ENCODE measurements at regions of chr20 and their contacts with region 1.

Region 1: DNA sequence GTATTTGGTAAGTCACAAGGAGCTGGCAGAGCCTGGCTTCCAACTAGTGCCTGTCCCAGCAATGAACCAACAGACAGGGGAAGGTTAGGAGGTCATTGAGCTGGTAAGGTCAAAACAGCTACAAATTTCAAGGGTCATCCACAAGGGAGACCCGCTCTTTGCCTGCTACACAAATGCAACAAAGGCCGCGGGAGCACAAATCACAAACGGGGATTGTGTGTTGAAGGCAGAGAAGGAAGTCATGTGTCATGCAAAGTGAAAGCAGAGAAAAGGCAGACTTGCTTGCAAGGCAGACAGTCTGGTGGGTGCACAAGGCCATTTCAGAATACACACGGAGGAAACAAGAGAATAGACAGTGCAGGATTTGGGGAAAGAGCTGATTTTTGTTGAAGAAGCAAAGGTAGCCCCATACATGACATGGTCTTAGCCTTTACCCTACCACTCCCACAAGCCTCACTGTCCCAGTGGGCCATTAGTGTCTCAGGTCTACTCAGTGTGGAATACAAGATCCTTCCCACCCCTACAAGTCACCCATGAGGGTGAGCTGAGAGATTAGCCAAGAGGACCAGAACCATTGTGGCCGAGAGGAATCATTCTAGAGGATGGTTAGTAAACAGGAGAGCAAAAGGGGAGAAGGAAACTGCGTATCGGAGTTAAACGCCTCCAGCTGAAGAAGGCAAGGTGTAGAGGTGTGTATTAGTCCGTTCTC is 18.1 kb upstream of the SAMHD1 start:
- DNase-seq: peak in 6 of 9 experiments; percentile 33 to 71 (median 46)
- ATAC-seq: peak; percentile 80
- H3K4me3 ChIP-seq: peak overlapping the region in 1 of 2 experiments; percentile 26
- H3K4me3 Mint-ChIP-seq: peak overlapping the region; percentile 51
- H3K27ac ChIP-seq: peak overlapping the region; percentile 38 to 43
- H3K27ac Mint-ChIP-seq: peak overlapping the region; percentile 91
- H3K4me1 ChIP-seq: peaks cover 74% of the 10 kb centered on the region
- H3K4me1 Mint-ChIP-seq: peaks cover 68% of the 10 kb centered on the region
- H3K27me3 ChIP-seq: no peaks in the 10 kb centered on the region
- H3K27me3 Mint-ChIP-seq: no peaks in the 10 kb centered on the region
- CTCF ChIP-seq: no peak

Region 2: DNA sequence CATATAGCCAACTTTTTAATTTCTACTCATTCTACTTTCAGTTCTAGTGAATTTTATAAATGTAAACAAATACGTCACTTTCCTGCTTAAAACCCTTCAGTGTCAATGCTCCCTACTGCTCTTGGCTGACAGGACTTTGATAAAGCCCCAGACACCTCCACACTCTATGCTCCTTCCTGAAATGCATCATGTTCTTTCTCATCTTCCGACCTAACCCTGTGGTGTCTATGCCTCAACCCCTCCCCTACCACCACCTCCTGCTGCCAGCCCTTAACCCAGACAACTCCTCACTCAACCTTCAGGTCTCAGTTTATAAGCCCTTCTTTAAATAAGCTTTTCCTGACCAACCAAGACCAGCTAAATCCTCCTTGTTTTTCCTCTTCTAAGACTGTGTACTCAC is 74.6 kb before region 1 on chr20:
- CTCF ChIA-PET with region 1: no interaction called
- POLR2A ChIA-PET with region 1: no interaction called
- intact Hi-C with region 1: no loop called
- DNase-seq: no peak
- ATAC-seq: peak; percentile 56
- H3K4me3 ChIP-seq: no peak overlapping the region
- H3K4me3 Mint-ChIP-seq: no peak overlapping the region
- H3K27ac ChIP-seq: no peak overlapping the region
- H3K27ac Mint-ChIP-seq: peak overlapping the region; percentile 87
- H3K4me1 ChIP-seq: no peaks in the 10 kb centered on the region
- H3K4me1 Mint-ChIP-seq: peaks cover 11% of the 10 kb centered on the region
- H3K27me3 ChIP-seq: no peaks in the 10 kb centered on the region
- H3K27me3 Mint-ChIP-seq: no peaks in the 10 kb centered on the region
- CTCF ChIP-seq: no peak

Region 3: DNA sequence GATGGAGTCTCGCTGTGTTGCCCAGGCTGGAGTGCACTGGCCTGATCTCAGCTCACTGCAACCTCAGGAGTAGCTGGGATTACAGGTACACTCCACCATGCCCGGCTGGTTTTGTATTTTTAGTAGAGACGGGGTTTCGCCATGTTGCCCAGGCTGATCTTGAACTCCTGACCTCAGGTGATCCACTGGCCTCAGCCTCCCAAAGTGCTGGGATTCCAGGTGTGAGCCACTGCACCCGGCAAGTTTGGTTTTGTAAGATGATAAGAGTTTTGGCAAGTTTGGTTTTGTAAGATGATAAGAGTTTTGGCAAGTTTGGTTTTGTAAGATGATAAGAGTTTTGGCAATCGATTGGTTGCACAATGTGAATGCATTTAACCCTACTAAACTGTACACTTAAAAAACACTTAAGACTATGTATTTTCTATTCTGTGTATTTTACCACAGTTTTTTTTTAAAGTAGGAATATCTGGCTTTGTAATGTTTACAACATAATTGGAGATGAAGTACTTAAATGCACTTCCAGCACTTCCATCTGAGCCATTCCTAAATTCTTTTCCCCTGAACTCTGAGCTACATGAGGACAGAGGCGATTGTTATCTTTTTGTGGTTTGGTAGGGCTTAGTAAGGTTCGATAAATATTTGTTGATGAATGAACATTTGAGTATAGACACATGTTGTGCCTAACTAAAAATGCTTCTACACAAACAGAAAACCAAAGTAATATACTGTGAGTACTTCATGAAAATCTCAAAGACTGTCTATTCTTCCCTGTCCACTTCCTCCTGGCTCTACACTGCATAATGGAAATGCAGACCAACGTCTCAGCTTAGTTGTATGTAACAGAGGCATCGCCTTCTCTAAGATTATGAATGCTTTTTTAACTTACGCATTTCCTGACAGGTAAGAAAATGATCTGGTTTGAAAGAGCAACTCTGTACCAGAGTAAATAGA is 36.9 kb before region 1 on chr20:
- CTCF ChIA-PET with region 1: no interaction called
- POLR2A ChIA-PET with region 1: interaction called, 15 read pairs
- intact Hi-C with region 1: loop called (anchors 5 kb)
- DNase-seq: peak in 1 of 9 experiments; percentile 35
- ATAC-seq: no peak
- H3K4me3 ChIP-seq: no peak overlapping the region
- H3K4me3 Mint-ChIP-seq: no peak overlapping the region
- H3K27ac ChIP-seq: peak overlapping the region; percentile 10 to 29
- H3K27ac Mint-ChIP-seq: peak overlapping the region; percentile 69
- H3K4me1 ChIP-seq: peaks cover 65% of the 10 kb centered on the region
- H3K4me1 Mint-ChIP-seq: peaks cover 54% of the 10 kb centered on the region
- H3K27me3 ChIP-seq: no peaks in the 10 kb centered on the region
- H3K27me3 Mint-ChIP-seq: no peaks in the 10 kb centered on the region
- CTCF ChIP-seq: no peak

Region 4: GRCh38 chr20:36951198-36951976 is 18.2 kb before region 1 on chr20 and contains the start of gene SAMHD1:
- CTCF ChIA-PET with region 1: interaction called, 4 read pairs
- POLR2A ChIA-PET with region 1: interaction called, 6 read pairs
- intact Hi-C with region 1: loop called (anchors 1 to 2 kb)
- DNase-seq: peak; percentile 67 to 92 (median 82)
- ATAC-seq: peak; percentile 70
- H3K4me3 ChIP-seq: peak within 1 kb of the TSS; percentile 95 to 99
- H3K4me3 Mint-ChIP-seq: peak within 1 kb of the TSS; percentile 96
- H3K27ac ChIP-seq: peak within 1 kb of the TSS; percentile 80 to 88
- H3K27ac Mint-ChIP-seq: peak within 1 kb of the TSS; percentile 96
- H3K4me1 ChIP-seq: peaks cover 47% of the 10 kb centered on the region
- H3K4me1 Mint-ChIP-seq: peaks cover 50% of the 10 kb centered on the region
- H3K27me3 ChIP-seq: no peaks in the 10 kb centered on the region
- H3K27me3 Mint-ChIP-seq: no peaks in the 10 kb centered on the region
- CTCF ChIP-seq: no peak
- total RNA-seq, gene SAMHD1: 74.6 to 78.2 TPM

Measured in CD8-positive, alpha-beta T cell (primary cell).